ENCODE measurements at regions of chr20 and their contacts with region 1.

Region 1: GRCh38 chr20:25444556-25444955 is 37.1 kb downstream of the GINS1 start:
- DNase-seq: no peak
- ATAC-seq: no peak
- H3K4me3 ChIP-seq: no peak overlapping the region
- H3K27ac ChIP-seq: no peak overlapping the region
- H3K4me1 ChIP-seq: no peaks in the 10 kb centered on the region
- H3K27me3 ChIP-seq: no peaks in the 10 kb centered on the region
- CTCF ChIP-seq: no peak

Region 2: DNA sequence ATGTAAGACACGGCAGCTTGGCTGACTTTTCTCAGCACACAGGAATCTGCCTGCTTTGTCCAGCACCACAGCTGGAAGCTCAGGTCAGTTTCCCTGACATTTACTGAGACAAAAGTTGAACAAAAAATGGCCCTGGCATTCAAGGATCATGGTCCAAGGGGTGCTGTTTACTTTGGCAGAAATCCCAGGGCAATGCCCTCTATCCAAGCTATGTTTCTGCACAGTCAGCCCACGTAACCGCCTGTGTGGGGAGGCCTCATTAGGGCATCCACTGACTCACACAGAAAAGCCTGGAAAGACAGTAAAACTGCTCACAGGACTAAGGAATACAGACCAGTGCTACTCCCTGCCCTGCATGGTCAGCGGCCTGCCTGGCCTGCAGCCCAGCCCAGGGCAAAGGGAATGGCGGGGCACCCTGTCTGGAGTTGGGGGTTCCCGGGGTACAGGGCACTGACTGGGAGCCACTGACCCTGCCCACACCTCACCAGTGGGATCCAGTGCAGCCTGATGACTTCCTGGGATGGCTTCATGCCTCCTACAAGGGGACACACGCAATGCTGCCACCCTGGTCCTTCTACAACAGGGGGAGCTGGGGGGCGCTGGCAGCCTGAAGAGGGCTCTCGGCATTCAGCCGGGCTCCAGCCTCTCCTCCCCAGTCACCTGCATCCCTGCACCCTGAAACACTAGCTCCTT is 63.7 kb after region 1 on chr20:
- intact Hi-C with region 1: loop called in 1 of 3 experiments (anchors 10 kb)
- DNase-seq: peak in 5 of 6 donors; percentile 47 to 76 (median 50)
- ATAC-seq: peak; percentile 81 to 96 (median 92)
- H3K4me3 ChIP-seq: no peak overlapping the region
- H3K27ac ChIP-seq: peak overlapping the region in 1 of 4 donors; percentile 57
- H3K4me1 ChIP-seq: peaks cover 0 to 5% (median 0%) of the 10 kb centered on the region in 3 donors
- H3K27me3 ChIP-seq: no peaks in the 10 kb centered on the region
- CTCF ChIP-seq: no peak

Region 3: DNA sequence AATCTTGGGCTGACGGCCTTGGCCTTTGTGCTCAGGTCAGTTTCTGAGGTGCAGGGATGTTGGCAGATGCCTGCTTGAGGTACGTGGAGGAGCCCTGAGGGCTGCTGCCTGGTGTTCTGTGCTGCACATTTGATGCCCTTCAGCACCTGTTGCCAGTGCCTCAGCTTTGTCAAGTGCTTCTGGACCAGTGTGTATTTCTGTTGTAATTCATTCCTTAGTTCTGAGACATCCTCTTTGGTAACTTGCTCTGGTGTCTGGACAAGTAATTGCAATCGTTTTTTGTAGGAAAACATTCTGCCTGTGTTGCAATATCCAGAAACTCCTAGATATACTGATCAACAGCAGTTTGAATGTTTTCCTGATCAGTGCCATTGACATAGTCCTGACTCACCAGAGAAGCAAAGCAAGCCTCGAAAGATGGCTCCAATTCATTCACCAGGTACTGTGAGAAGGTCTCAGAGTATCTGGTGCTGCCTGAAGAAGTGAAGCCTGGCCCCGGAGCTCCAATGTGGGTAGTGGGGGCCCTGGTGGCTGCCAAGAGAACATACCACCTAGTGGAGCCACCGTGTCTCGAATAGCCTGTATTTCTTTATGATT is 225.4 kb after region 1 on chr20:
- intact Hi-C with region 1: no loop called
- DNase-seq: no peak
- ATAC-seq: peak in 1 of 4 donors; percentile 23
- H3K4me3 ChIP-seq: no peak overlapping the region
- H3K27ac ChIP-seq: no peak overlapping the region
- H3K4me1 ChIP-seq: no peaks in the 10 kb centered on the region
- H3K27me3 ChIP-seq: no peaks in the 10 kb centered on the region
- CTCF ChIP-seq: no peak

Measured in pancreas (tissue), 10 donors.